Cardiac septum (tissue), 1 donor: ENCODE measurements at regions of chr17 and their contacts with region 1.

Region 1: DNA sequence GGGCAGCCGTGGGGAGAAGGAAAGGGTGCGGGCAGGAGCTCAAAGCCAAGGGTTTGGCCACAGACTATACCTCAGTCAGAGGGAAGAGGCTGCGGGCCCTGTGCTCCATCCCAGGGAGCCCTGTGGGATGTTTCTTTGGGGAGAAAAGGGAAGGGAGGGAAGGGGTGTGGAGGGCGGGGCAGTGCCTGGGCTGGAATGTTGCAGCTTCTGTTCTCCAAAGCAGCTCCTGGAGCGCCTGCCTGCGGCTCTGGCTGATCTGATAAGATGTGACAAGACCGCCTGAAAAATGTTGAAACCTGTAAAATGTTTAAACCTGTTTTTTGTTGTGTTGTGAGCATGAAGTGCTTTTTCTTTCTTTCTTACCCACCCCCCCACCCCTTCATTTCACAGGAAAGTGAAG is 32.8 kb downstream of the WNT3 start:
- DNase-seq: no peak

Region 2: GRCh38 chr17:46736100-46736499 is 49.6 kb before region 1 on chr17:
- intact Hi-C with region 1: loop called (anchors 5 kb)
- DNase-seq: no peak

Region 3: GRCh38 chr17:46836500-46836899 is 50.8 kb after region 1 on chr17:
- intact Hi-C with region 1: loop called (anchors 5 kb)
- DNase-seq: no peak